ENCODE measurements at regions of chr1 and their contacts with region 1.

Region 1: GRCh38 chr1:233406994-233407631 is 79.6 kb downstream of the MAP3K21 start:
- DNase-seq: no peak
- H3K4me3 ChIP-seq: no peak overlapping the region
- H3K27ac ChIP-seq: no peak overlapping the region
- H3K4me1 ChIP-seq: no peaks in the 10 kb centered on the region
- H3K27me3 ChIP-seq: no peaks in the 10 kb centered on the region
- CTCF ChIP-seq: no peak

Region 2: DNA sequence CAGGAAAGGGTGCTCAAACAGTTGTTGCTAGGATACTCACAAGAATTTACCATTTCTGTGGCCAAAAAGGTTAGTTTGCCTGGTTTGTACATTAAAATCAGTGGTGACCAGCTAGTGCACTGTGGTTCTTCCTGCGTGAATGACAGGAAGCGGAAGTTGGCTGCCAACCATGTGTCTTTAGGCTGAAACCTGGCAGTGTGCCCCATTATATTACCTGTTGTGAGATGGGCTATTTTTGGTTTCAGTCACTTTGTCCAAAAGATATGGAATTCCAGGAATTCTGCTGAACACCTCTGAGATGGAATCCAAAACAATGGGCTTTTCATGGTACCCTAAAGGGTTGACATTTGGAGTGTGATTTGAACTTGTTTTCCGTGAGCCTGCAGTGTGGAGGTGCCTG is 66.0 kb before region 1 on chr1:
- CTCF ChIA-PET with region 1: no interaction called
- POLR2A ChIA-PET with region 1: no interaction called
- intact Hi-C with region 1: no loop called
- DNase-seq: no peak
- H3K4me3 ChIP-seq: no peak overlapping the region
- H3K27ac ChIP-seq: no peak overlapping the region
- H3K4me1 ChIP-seq: no peaks in the 10 kb centered on the region
- H3K27me3 ChIP-seq: no peaks in the 10 kb centered on the region
- CTCF ChIP-seq: no peak

Region 3: DNA sequence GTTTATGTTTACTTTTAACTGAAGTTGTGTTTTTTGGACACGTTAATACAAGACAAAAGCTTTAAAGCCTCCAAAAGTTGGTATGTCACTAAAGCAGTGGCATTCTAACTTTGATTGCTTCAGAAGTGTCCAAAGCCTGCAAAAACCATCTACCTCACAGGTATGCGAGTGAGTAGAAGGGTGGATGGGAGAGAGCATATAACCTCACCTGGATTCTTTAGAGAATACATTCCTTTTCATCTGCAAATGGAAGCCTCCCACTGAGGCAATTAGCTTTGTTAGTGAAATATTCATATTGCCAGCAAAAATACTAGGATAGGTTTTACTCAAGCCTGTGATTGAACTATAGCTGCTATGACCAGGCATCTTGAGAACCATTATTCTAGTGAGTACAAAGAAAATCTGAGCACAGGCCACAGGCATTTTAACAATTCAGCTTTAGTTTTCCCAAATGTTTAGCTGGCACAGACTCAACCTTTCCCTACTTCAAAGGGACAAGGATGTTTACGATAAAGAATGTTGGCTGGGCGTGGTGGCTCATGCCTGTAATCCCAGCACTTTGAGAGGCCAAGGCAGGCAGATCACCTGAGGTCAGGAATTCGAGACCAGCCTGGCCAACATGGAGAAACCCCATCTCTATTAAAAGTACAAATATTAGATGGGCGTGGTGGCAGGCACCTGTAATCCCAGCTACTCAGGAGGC is 39.9 kb before region 1 on chr1:
- CTCF ChIA-PET with region 1: no interaction called
- POLR2A ChIA-PET with region 1: no interaction called
- intact Hi-C with region 1: no loop called
- DNase-seq: peak; percentile 78 to 83
- H3K4me3 ChIP-seq: no peak overlapping the region
- H3K27ac ChIP-seq: peak overlapping the region; percentile 42
- H3K4me1 ChIP-seq: peaks cover 26% of the 10 kb centered on the region
- H3K27me3 ChIP-seq: no peaks in the 10 kb centered on the region
- CTCF ChIP-seq: no peak

Region 4: GRCh38 chr1:233379869-233380438 is 27.2 kb before region 1 on chr1:
- CTCF ChIA-PET with region 1: no interaction called
- POLR2A ChIA-PET with region 1: no interaction called
- intact Hi-C with region 1: no loop called
- DNase-seq: no peak
- H3K4me3 ChIP-seq: no peak overlapping the region
- H3K27ac ChIP-seq: no peak overlapping the region
- H3K4me1 ChIP-seq: no peaks in the 10 kb centered on the region
- H3K27me3 ChIP-seq: no peaks in the 10 kb centered on the region
- CTCF ChIP-seq: no peak

Region 5: GRCh38 chr1:233459470-233459945 is 52.4 kb after region 1 on chr1:
- CTCF ChIA-PET with region 1: no interaction called
- POLR2A ChIA-PET with region 1: no interaction called
- intact Hi-C with region 1: loop called (anchors 10 kb)
- DNase-seq: no peak
- H3K4me3 ChIP-seq: no peak overlapping the region
- H3K27ac ChIP-seq: no peak overlapping the region
- H3K4me1 ChIP-seq: no peaks in the 10 kb centered on the region
- H3K27me3 ChIP-seq: no peaks in the 10 kb centered on the region
- CTCF ChIP-seq: no peak

Region 6: DNA sequence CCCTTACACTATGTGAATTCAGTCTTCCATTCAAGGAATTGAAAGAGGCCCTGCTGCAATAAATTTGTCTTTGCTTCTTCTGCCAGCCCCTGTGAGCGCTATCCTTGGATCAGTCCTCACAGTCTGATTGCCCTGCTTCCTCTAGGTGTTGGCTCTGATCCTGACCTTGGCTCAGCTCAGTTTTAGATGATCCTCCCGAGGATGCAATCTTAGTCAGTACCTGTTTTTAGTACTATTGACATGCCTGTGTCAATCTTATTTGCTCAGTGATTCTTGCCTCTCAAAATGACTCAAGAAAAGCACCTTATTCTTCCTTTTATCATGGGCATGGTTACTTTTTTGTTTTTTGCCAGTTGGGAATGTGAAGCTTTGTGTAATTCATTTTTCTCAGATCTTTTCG is 105.4 kb after region 1 on chr1:
- CTCF ChIA-PET with region 1: no interaction called
- POLR2A ChIA-PET with region 1: no interaction called
- intact Hi-C with region 1: no loop called
- DNase-seq: no peak
- H3K4me3 ChIP-seq: no peak overlapping the region
- H3K27ac ChIP-seq: no peak overlapping the region
- H3K4me1 ChIP-seq: no peaks in the 10 kb centered on the region
- H3K27me3 ChIP-seq: no peaks in the 10 kb centered on the region
- CTCF ChIP-seq: no peak